BJ (cell line): ENCODE measurements at regions of chr1 and their contacts with region 1.

Region 1: DNA sequence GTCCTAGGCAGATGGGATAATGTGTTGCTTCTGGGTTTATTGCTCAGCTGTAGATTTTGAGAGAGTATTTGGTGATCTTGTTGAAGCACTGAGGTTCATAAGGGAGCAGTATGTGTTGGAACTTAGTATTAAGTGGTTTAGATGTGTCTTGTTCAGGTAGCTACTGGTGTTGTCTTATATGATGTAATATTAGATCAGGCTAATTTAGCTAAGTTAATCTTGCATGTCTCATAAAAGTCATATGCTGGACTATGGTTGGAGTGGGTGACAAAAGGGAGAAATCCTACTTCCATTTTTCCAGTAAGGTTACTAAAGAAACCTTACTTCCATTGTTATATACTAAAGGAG is 196.4 kb downstream of the CLEC20A start:
- DNase-seq: no peak
- H3K4me3 ChIP-seq: no peak overlapping the region
- H3K27me3 ChIP-seq: no peaks in the 10 kb centered on the region
- CTCF ChIP-seq: no peak

Region 2: GRCh38 chr1:178282949-178283367 is 17.4 kb before region 1 on chr1:
- CTCF ChIA-PET with region 1: interaction called, 14 read pairs
- POLR2A ChIA-PET with region 1: no interaction called
- DNase-seq: no peak
- H3K4me3 ChIP-seq: no peak overlapping the region
- H3K27me3 ChIP-seq: no peaks in the 10 kb centered on the region
- CTCF ChIP-seq: peak; percentile 62

Region 3: DNA sequence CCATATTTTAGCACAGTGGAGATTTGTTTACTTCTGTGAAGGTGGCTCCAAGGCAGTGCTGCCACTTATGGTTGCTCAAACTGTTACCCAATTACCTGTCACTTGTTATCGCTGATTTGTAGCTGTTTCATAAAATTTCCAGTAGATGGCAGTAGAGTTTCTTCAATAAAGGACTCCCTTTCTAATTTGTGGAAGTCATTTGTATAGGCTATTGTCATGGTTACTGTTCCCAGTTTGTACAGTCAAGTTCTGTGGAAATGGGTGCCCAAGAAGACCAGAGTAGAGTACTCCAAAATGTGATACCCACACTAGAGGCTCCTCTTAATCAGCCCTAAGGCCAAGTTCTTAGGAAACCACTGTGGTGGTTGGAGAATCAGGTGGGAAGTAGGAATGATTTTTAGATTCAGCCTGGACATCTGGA is 10.4 kb after region 1 on chr1:
- CTCF ChIA-PET with region 1: interaction called, 32 read pairs
- POLR2A ChIA-PET with region 1: no interaction called
- DNase-seq: peak; percentile 46
- H3K4me3 ChIP-seq: no peak overlapping the region
- H3K27me3 ChIP-seq: no peaks in the 10 kb centered on the region
- CTCF ChIP-seq: peak; percentile 66

Region 4: GRCh38 chr1:178633056-178633455 is 332.7 kb after region 1 on chr1:
- CTCF ChIA-PET with region 1: no interaction called
- POLR2A ChIA-PET with region 1: no interaction called
- DNase-seq: no peak
- H3K4me3 ChIP-seq: no peak overlapping the region
- H3K27me3 ChIP-seq: no peaks in the 10 kb centered on the region
- CTCF ChIP-seq: no peak